Prostate gland (tissue), 2 donors: ENCODE measurements at regions of chr10 and their contacts with region 1.

Region 1: DNA sequence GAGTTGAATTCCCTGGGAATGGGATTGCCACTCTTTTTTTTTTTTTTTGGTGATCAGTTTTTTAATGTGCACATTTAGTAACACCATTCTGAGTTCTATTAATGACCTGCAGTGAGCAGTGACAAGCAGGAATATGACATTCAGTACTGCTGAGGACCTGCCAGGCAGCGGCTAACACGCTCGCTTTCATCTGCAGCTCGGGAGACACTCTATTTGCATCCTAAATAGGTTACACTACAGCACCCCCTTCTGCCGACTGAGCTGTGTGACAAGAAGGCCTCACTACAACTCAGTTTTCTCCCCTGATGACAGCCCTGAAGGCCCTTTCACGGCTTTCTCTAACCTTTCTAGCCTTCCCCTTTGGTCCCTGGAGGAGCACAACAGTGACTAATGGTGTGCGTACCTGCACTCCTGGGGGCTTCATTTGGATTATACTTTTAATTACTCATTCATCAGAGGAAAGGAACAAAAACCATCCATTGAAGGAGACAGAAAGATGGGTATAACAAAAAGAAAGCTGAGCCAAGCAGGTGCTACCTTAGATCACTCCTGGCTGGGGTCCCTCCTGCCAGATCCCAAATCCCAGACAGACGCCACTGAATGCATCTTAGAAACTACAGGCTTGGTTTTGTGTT is 872.4 kb downstream of the LRMDA start:
- DNase-seq: peak; percentile 83
- H3K4me3 ChIP-seq: no peak overlapping the region
- H3K27ac ChIP-seq: peak overlapping the region in 1 of 2 donors; percentile 16
- H3K4me1 ChIP-seq: no peaks in the 10 kb centered on the region
- H3K27me3 ChIP-seq: no peaks in the 10 kb centered on the region
- CTCF ChIP-seq: peak in 3 of 4 experiments; percentile 39 to 73 (median 69)
- POLR2A ChIP-seq: no peak

Region 2: GRCh38 chr10:75651417-75651816 is 652.4 kb before region 1 on chr10:
- intact Hi-C with region 1: loop called (anchors 10 kb)
- DNase-seq: no peak
- H3K4me3 ChIP-seq: no peak overlapping the region
- H3K27ac ChIP-seq: no peak overlapping the region
- H3K4me1 ChIP-seq: no peaks in the 10 kb centered on the region
- H3K27me3 ChIP-seq: no peaks in the 10 kb centered on the region
- CTCF ChIP-seq: peak in 2 of 4 experiments; percentile 6 to 16
- POLR2A ChIP-seq: no peak

Region 3: DNA sequence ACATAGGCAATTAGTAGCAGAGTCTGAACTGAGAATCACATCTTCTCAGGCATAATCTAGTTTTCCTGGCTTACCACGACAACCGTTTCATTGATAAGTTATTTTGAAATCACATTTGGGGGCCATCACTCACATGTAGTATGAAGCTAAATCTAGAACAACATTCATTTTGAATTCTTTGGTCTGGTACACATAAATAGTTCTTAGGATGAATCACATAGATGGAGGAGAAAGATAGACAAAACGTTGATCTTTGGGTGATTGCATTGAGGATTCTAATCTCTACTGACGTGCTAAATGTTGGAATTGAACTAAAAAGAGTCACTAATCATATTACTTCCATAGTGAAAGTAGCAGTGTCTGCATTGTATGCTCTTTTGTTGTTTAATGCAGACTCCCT is 150.2 kb after region 1 on chr10:
- intact Hi-C with region 1: no loop called
- DNase-seq: no peak
- H3K4me3 ChIP-seq: no peak overlapping the region
- H3K27ac ChIP-seq: no peak overlapping the region
- H3K4me1 ChIP-seq: no peaks in the 10 kb centered on the region
- H3K27me3 ChIP-seq: no peaks in the 10 kb centered on the region
- CTCF ChIP-seq: no peak
- POLR2A ChIP-seq: no peak

Region 4: DNA sequence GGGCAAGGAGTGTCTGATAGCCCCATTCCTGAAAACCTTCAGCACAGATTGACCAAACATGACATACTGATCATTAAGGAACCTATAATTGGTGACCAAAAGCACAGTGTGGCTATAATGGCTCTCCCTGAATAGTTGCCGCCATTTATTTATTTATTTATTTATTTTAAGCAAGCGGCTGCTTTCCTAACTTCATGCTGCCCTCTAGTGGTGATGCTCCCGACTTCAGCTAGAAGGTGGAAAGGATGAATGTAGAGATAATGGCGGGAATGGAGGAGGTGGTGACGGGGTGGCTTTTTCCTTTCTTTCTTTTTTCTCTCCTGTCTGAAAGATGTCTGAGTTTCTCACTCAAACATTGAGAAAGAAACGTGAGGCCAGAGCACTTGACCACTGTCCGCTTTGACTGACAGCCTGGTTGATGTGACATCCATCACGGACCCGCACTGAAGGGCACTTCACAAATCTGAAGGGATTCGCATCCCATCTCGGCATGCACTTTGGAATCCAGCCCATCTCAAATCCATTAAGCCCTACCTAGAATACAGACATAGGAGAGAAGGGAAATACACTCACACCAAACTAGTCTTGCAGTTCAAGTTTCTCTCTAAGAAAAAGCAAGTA is 243.7 kb after region 1 on chr10:
- intact Hi-C with region 1: loop called (anchors 10 kb)
- DNase-seq: peak; percentile 82
- H3K4me3 ChIP-seq: no peak overlapping the region
- H3K27ac ChIP-seq: no peak overlapping the region
- H3K4me1 ChIP-seq: no peaks in the 10 kb centered on the region
- H3K27me3 ChIP-seq: no peaks in the 10 kb centered on the region
- CTCF ChIP-seq: peak; percentile 74 to 86 (median 82)
- POLR2A ChIP-seq: no peak